ENCODE measurements at regions of chr17 and their contacts with region 1.

Region 1: DNA sequence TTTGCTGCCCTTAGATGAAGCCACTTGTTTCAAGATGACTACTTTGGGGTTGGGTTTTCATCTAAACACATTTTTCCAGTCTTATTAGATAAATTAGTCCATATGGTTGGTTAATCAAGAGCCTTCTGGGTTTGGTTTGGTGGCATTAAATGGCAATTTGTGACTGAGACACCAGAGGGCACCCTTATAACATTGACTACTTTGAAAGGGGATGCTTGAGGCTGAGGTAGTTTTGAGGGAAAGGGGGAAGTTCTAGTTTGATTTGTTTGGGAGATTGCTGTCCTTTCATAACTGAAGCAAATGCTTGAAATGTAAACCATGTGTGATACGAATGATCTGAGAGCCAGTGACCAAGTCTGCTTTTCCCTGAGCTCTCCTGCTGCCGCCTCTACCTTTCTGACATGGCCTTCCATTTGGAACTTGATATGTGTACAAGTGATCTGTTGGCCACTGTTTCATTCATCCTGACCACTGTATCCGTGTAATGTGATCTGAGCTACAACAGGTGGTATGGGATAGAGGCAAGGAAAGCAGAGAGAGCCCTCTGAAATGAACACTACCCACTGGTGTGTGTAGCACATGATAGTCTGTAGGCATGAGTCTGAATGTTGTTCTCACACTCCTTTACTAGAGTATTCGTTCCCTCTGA is 5.8 kb upstream of the RARA start:
- DNase-seq: peak; percentile 63
- ATAC-seq: no peak
- H3K4me3 Mint-ChIP-seq: no peak overlapping the region
- H3K27ac Mint-ChIP-seq: no peak overlapping the region
- H3K4me1 Mint-ChIP-seq: peaks cover 18% of the 10 kb centered on the region
- H3K27me3 Mint-ChIP-seq: no peaks in the 10 kb centered on the region

Region 2: DNA sequence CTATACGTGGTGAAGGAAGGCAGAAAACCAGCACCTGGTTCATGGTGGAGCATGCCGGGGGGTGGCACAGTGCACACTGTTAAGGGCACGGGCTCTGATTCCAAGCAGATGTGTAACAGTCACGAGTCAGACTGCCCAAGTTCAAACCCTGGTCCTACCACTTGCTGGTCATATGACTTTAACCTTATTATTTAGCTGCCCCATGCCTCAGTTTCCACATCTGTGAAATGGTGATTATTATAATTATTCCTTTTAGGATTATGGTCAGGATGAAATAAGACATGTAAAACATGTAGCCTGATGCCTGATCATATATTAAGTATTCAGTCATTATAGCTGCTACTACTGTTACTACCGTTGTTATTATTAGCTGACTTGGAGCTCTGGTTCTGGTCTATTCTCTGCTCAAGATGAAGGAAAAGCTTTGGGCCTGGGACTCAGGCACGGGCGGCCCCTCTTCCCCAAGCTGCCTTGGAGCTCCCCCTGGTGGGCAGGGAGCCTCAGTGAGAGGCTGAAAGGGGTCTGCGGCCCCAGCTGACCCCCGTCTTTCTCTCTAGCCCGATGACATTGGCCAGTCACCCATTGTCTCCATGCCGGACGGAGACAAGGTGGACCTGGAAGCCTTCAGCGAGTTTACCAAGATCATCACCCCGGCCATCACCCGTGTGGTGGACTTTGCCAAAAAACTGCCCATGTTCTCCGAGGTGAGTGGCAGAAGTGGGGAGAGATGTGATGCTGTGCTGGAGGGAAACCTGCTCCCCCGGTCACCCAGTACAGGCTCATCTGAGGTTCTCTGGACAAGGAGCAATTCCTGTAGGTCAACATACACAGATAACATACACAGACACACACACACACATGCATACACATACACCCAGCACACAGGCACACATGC is 216.7 kb before region 1 on chr17:
- CTCF ChIA-PET with region 1: no interaction called
- POLR2A ChIA-PET with region 1: no interaction called
- DNase-seq: peak; percentile 60
- ATAC-seq: peak; percentile 48
- H3K4me3 Mint-ChIP-seq: no peak overlapping the region
- H3K27ac Mint-ChIP-seq: no peak overlapping the region
- H3K4me1 Mint-ChIP-seq: no peaks in the 10 kb centered on the region
- H3K27me3 Mint-ChIP-seq: no peaks in the 10 kb centered on the region

Region 3: DNA sequence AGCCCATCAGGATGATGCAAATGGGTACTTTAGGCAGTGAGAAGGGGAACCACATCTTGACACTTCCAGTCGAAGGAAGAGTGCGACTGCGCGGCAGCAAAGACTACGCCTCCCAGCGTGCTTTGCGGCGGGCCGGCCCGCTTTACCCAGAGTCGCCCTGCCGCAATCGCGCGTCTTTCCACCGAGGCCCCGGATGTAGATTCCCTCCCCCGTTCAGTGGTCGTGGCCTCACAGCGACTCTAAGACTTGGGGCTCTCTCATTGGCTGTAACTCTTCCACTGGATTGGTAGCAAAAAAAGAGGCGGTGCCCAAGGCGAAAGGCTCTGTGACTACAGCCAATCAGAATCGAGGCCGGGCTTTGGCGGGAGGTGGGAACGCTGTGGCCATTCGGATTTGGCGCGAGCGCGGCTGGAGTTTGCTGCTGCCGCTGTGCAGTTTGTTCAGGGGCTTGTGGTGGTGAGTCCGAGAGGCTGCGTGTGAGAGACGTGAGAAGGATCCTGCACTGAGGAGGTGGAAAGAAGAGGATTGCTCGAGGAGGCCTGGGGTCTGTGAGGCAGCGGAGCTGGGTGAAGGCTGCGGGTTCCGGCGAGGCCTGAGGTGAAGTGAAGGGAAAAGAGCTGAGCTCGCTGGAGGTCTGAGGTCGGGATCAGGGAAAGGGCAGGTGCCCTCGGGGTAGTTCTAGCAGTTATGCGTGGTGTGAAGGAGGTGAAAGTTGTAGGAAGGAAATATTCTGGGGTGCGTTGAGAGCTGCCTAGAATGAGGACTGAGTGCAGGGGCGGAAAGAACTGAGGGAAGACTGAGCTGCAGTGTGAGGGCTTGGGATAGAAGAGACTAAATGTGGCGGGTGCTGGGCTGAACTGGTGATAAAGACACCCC is 15.4 kb before region 1 on chr17 and contains the start of gene CDC6:
- CTCF ChIA-PET with region 1: interaction called, 69 read pairs
- POLR2A ChIA-PET with region 1: interaction called, 3 read pairs
- DNase-seq: peak; percentile 100
- ATAC-seq: peak; percentile 96
- H3K4me3 Mint-ChIP-seq: peak within 1 kb of the TSS; percentile 98
- H3K27ac Mint-ChIP-seq: peak within 1 kb of the TSS; percentile 97
- H3K4me1 Mint-ChIP-seq: peaks cover 45% of the 10 kb centered on the region
- H3K27me3 Mint-ChIP-seq: no peaks in the 10 kb centered on the region
- total RNA-seq, gene CDC6: 103 to 110 TPM

Region 4: DNA sequence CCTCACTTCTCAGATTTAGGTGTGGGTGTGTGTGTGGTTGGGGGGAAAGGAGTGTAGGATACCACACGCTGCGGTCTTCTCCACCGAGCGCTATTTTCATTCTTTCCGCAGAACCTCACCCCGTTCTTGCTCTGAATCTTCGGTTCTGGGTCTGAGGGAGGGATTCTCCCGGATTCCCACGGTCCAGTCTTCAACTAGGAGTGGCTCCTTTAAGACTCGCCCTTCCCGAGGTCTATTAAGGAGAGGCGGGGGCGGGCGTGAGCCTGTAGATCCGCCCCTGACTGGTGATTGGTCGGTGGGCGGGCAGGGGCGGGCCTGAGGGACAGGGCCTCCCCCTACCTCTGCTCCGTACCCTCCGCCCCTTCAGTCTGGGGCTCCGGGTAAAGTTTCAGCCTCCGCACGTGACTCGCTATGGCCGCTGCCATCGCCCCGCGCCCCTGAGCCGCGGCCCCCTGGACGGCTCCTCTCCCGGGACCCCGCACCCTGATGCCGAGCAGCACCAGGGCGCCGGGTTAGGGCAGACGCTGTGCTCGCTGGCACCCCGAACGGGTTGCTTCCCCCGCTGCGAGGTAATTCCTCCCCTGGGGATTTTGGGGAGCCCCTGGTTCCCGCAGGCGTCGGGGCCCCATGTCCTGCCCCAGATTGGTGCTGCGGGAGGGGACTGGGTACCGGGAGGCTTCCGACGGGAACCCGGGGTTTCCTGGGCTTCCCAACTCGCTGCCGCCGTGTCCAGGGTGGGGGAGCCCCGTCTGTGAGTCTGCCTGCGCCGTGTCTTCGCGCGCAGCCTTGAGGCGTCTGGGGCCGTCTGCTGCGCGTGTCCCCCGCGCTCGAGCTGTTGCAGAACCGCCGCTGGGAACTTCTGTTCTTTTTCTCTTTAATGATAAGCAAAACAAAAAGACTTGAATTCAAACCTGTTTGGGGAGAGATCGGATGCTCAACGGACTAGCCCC is 15.0 kb after region 1 on chr17:
- CTCF ChIA-PET with region 1: interaction called, 61 read pairs
- POLR2A ChIA-PET with region 1: interaction called, 16 read pairs
- DNase-seq: peak; percentile 94
- ATAC-seq: peak; percentile 66
- H3K4me3 Mint-ChIP-seq: peak overlapping the region; percentile 95
- H3K27ac Mint-ChIP-seq: peak overlapping the region; percentile 98
- H3K4me1 Mint-ChIP-seq: peaks cover 67% of the 10 kb centered on the region
- H3K27me3 Mint-ChIP-seq: no peaks in the 10 kb centered on the region

Region 5: DNA sequence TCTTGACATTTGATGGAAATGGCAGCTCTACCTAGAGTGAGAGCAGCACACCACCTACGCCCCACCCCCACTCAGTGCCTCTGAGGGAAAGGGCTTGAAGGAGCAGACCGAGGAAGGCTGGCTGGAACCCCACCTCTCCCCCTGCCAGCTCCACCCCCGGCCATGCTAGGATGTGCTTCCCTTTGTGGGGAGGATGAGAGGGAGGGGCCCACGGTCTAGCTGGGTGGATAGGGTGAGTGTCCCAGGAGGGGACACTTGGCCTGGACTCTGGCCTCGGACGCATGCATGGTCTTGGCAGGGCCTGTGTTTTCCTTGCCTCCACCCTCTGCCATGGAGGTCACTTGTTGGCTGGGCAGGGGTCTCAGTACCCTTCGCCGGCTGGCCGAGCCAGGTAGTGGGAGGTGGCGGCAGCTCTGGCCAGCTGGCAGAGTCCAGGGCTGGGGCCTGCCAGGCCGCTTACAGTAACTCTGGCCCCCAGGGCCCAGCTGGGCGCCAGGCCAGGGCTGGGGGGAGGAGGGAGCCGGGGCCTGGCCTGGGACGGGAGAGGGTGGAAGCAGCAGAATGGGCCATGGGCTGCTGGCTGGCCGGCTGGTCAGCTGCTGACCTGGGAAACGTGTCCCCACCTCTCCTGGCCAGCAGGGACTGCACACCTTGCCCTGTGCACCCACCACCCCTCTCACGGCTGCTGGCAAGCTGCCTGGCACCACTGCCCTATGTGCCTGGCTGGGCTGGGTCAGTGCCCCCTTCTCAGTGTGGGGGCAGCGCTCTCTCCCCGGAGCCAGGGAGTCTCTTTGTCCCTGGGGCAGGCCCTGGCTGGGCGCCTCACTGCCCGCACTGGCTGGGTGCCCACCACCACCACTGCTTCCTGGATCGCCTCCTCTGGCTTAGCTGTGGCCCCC is 28.9 kb after region 1 on chr17:
- CTCF ChIA-PET with region 1: interaction called, 10 read pairs
- POLR2A ChIA-PET with region 1: interaction called, 3 read pairs
- DNase-seq: peak; percentile 40
- ATAC-seq: no peak
- H3K4me3 Mint-ChIP-seq: peak overlapping the region; percentile 40
- H3K27ac Mint-ChIP-seq: peak overlapping the region; percentile 73
- H3K4me1 Mint-ChIP-seq: peaks cover 84% of the 10 kb centered on the region
- H3K27me3 Mint-ChIP-seq: no peaks in the 10 kb centered on the region

Region 6: DNA sequence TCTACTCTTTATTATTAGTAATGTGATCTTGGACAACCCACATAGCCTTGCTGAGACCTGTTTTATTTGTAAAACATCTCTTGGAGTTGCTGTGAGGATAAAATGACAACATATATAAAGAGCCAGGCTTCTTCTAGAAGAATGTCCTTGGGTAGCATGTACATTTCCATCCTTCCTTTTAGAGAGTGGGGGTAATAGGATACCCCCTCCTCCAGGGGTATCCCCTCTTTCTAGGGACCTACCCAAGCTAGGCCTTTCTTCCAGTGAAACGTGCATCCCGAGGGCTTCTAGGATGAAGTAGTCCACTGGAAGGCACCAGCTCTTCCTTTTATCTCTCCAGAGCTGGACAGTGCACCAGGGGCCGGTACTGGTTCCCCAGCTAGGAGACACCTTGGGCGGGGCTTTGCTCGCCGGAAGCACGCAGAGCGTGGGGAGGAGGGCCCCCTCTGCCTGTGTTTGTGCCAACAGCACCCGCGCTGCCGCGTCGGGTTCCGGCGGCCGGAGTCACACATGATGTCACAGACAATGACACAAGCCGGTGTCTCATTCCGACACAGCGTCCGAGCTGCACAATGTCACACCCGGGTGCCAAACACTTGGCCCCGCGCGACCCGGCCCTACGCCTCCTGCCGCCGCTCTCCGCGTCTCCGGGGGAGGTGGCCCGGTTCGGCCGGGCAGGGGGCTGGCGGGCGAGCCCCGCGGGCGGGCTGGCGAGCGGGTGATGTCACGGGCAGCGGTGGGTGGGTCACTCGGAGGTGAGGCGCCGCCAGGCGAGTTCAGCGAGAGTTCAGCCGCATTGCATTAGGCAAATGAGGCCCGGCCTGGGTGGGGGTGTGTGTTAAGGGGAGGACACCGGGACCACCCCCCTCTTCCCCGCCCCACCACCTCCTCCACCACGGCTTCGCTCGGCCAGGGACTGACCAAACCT is 38.0 kb after region 1 on chr17:
- CTCF ChIA-PET with region 1: interaction called, 14 read pairs
- POLR2A ChIA-PET with region 1: interaction called, 4 read pairs
- DNase-seq: peak; percentile 92
- ATAC-seq: peak; percentile 83
- H3K4me3 Mint-ChIP-seq: peak overlapping the region; percentile 73
- H3K27ac Mint-ChIP-seq: peak overlapping the region; percentile 90
- H3K4me1 Mint-ChIP-seq: peaks cover 86% of the 10 kb centered on the region
- H3K27me3 Mint-ChIP-seq: no peaks in the 10 kb centered on the region

Region 7: GRCh38 chr17:40362696-40363110 is 59.6 kb after region 1 on chr17:
- CTCF ChIA-PET with region 1: interaction called, 28 read pairs
- POLR2A ChIA-PET with region 1: interaction called, 4 read pairs
- DNase-seq: peak; percentile 93
- ATAC-seq: peak; percentile 93
- H3K4me3 Mint-ChIP-seq: peak overlapping the region; percentile 72
- H3K27ac Mint-ChIP-seq: no peak overlapping the region
- H3K4me1 Mint-ChIP-seq: peaks cover 41% of the 10 kb centered on the region
- H3K27me3 Mint-ChIP-seq: peaks cover 13% of the 10 kb centered on the region

Measured in activated CD8-positive, alpha-beta T cell treated with anti-CD3 and anti-CD28 coated beads, Interleukin-2, amount 10 ng/mL, durations not matched to agents 7 days and 5 days (primary cell).